ENCODE measurements at regions of chr12 and their contacts with region 1.

Region 1: GRCh38 chr12:13255792-13256691 is 59.5 kb downstream of the EMP1 start:
- DNase-seq: peak; percentile 82
- CTCF ChIP-seq: peak; percentile 99

Region 2: GRCh38 chr12:12835378-12836145 is 420.5 kb before region 1 on chr12:
- CTCF ChIA-PET with region 1: no interaction called
- POLR2A ChIA-PET with region 1: no interaction called
- DNase-seq: no peak
- CTCF ChIP-seq: no peak

Region 3: DNA sequence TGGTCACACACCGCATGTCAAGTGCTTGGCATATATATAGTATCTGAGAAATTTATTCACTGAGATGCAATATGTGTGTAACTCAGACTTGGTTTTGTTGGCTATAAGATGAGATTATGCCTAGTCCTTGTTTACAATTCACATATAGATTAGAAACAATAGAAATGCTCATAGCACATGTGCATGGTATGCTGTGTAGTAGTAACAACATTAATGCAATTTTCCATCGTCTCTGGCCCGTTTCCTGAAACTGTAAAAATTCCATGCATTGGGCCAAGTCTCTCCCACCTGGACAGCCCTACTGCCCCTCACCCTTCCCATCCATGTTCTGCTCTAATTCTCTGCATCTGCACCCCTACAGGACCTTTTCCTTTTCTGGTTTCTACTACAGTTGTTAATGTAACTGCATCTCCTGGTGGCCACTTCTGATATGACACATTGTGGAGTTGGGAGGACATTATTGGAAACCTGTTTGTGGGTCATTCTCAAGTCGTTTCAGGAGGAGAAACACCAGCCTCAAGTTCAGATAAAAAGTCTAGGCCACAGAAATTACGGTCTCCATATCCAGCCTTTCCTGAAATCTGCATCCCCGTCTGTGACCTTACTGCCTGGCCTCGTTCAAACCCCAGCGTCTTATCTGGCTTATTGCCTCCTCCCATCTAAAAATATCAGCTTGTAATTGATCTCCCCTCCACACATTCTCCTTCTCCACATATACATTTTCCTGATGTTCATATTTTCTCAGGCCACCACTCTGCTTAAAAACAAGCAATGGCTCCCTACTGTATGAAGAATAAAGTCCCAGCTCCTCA is 22.0 kb before region 1 on chr12:
- CTCF ChIA-PET with region 1: interaction called, 23 read pairs
- POLR2A ChIA-PET with region 1: no interaction called
- DNase-seq: peak; percentile 34
- CTCF ChIP-seq: peak; percentile 53

Region 4: GRCh38 chr12:13243516-13244070 is 12.4 kb before region 1 on chr12:
- CTCF ChIA-PET with region 1: interaction called, 41 read pairs
- POLR2A ChIA-PET with region 1: no interaction called
- DNase-seq: no peak
- CTCF ChIP-seq: no peak

Region 5: GRCh38 chr12:13275241-13276085 is 19.4 kb after region 1 on chr12:
- CTCF ChIA-PET with region 1: interaction called, 40 read pairs
- POLR2A ChIA-PET with region 1: no interaction called
- DNase-seq: no peak
- CTCF ChIP-seq: no peak

Measured in GM10248 (cell line).